Breast epithelium (tissue), 4 donors: ENCODE measurements at regions of chr5 and their contacts with region 1.

Region 1: GRCh38 chr5:174503461-174504265 is 220.7 kb upstream of the MSX2 start:
- DNase-seq: peak in 1 of 2 donors; percentile 38
- H3K4me3 ChIP-seq: peak overlapping the region in 2 of 3 donors; percentile 30 to 52
- H3K27ac ChIP-seq: peak overlapping the region; percentile 76 to 83
- H3K4me1 ChIP-seq: peaks cover 0 to 7% of the 10 kb centered on the region in 2 donors
- H3K27me3 ChIP-seq: no peaks in the 10 kb centered on the region
- CTCF ChIP-seq: no peak
- POLR2A ChIP-seq: no peak

Region 2: DNA sequence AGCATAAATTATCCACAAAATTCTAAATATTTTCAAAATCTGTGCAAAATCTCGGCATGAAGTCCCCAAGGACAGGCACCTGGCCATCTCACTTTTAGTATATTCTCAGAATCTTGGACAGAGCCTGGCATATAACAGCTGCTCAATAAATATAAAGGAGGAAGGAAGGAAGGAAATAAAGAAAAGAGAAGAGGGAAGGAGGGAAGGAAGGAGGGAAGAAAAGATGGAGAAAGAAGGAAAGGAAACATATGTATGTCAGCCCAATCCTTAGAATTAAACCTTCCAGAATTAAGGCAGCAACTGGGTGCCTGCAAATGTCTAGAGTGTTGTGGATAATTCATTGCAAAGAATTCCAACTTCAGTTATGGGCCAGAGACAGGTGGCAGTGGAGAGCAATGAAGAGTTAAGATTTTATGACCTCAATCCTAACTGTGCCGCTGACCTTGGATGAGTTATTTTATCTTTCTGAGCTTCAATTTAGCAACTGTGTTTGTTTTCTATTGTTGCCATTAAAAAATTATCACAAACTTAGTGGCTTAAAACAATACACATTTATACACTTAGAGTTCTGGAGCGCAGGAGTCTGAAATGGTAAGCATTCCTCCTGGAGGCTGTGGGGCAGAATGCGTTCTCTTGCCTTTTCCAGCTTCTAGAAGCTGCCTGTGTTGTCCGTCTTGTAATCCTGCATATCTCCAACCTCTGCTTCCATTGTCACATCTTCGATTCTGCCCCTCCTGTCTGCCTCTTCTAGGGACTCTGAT is 19.8 kb after region 1 on chr5:
- intact Hi-C with region 1: loop called (anchors 1 kb)
- DNase-seq: no peak
- H3K4me3 ChIP-seq: no peak overlapping the region
- H3K27ac ChIP-seq: no peak overlapping the region
- H3K4me1 ChIP-seq: no peaks in the 10 kb centered on the region
- H3K27me3 ChIP-seq: no peaks in the 10 kb centered on the region
- CTCF ChIP-seq: no peak
- POLR2A ChIP-seq: no peak

Region 3: GRCh38 chr5:175325681-175326080 is 822.0 kb after region 1 on chr5:
- intact Hi-C with region 1: loop called (anchors 5 kb)
- DNase-seq: no peak
- H3K4me3 ChIP-seq: no peak overlapping the region
- H3K27ac ChIP-seq: no peak overlapping the region
- H3K4me1 ChIP-seq: no peaks in the 10 kb centered on the region
- H3K27me3 ChIP-seq: peaks cover 0 to 12% of the 10 kb centered on the region in 2 donors
- CTCF ChIP-seq: no peak
- POLR2A ChIP-seq: no peak